ENCODE measurements at regions of chr1 and their contacts with region 1.

Region 1: DNA sequence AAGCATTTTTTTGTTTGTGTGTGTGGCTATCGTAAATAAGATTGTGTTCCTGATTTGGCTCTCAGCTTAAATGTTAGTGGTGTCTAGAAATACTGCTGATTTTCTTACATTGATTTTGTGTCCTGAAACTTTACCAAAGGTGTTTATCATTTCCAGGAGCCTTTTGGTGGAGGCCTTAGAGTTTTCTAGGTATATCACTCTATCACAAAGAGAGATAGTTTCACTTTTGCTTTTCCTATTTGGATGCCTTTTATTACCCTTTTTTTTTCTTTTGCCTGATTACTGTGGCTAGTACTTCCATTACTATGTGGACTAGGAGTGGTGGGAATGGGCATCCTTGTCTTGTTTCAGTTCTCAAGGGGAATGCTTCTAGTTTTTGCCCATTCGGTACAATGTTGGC is 109.6 kb downstream of the S1PR1 start:
- DNase-seq: peak in 1 of 35 experiments; percentile 15
- ATAC-seq: peak in 2 of 4 experiments; percentile 32 to 36
- H3K4me3 ChIP-seq: no peak overlapping the region
- H3K4me3 Mint-ChIP-seq: peak overlapping the region; percentile 45 to 72 (median 57)
- H3K27ac ChIP-seq: no peak overlapping the region
- H3K27ac Mint-ChIP-seq: peak overlapping the region; percentile 85 to 87
- H3K4me1 ChIP-seq: no peaks in the 10 kb centered on the region
- H3K4me1 Mint-ChIP-seq: peaks cover 38 to 42% (median 38%) of the 10 kb centered on the region in 3 donors
- H3K27me3 ChIP-seq: no peaks in the 10 kb centered on the region
- H3K27me3 Mint-ChIP-seq: no peaks in the 10 kb centered on the region

Region 2: DNA sequence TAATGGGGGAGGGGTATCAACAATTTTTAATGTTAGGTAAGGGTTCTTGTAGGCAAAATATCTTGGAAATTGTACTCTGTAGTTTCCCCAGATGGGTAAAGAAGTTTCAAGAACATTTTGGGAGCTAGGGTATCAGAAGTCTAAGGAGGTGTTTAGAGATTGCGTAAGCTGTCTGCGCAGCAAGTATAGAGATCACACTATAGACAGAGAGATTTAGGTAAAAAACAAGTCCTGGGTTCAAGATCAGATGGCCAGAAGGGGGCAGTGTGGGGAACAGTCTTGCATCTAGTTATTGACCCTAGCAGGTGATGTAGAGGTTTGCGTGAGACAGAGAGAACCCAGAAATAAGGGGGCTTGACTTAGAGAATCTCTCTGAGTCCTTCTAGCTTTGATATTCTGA is 28.8 kb before region 1 on chr1:
- CTCF ChIA-PET with region 1: no interaction called
- POLR2A ChIA-PET with region 1: interaction called in 1 of 2 experiments, 11 read pairs
- DNase-seq: no peak
- ATAC-seq: no peak
- H3K4me3 ChIP-seq: no peak overlapping the region
- H3K4me3 Mint-ChIP-seq: no peak overlapping the region
- H3K27ac ChIP-seq: no peak overlapping the region
- H3K27ac Mint-ChIP-seq: no peak overlapping the region
- H3K4me1 ChIP-seq: peaks cover 5% of the 10 kb centered on the region in 2 experiments
- H3K4me1 Mint-ChIP-seq: peaks cover 21 to 25% (median 23%) of the 10 kb centered on the region in 3 donors
- H3K27me3 ChIP-seq: no peaks in the 10 kb centered on the region
- H3K27me3 Mint-ChIP-seq: peaks cover 0 to 2% of the 10 kb centered on the region in 2 donors

Region 3: DNA sequence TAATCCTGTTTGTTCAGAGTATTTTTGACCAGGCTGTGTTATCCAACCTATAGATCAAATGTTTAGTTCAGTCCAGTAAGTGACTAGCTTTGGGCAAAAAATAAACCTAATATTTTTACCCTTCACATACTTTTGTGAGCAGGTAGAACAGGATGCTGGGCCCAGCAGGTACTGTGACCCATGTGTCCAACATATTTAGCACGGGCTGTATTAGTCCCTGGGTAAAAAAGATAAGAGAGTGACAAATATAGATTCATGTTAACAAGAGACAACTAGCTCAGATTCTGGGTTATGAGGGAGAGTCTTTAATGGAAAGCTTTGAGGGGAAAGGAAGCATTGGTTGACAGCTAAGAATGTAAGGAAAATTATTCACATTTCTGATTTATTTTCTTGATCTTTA is 607.2 kb after region 1 on chr1:
- CTCF ChIA-PET with region 1: no interaction called
- POLR2A ChIA-PET with region 1: no interaction called
- DNase-seq: no peak
- ATAC-seq: no peak
- H3K4me3 ChIP-seq: no peak overlapping the region
- H3K4me3 Mint-ChIP-seq: no peak overlapping the region
- H3K27ac ChIP-seq: no peak overlapping the region
- H3K27ac Mint-ChIP-seq: no peak overlapping the region
- H3K4me1 ChIP-seq: no peaks in the 10 kb centered on the region
- H3K4me1 Mint-ChIP-seq: no peaks in the 10 kb centered on the region
- H3K27me3 ChIP-seq: no peaks in the 10 kb centered on the region
- H3K27me3 Mint-ChIP-seq: no peaks in the 10 kb centered on the region